Esophagus squamous epithelium (tissue), 5 donors: ENCODE measurements at regions of chr11 and their contacts with region 1.

Region 1: GRCh38 chr11:73652046-73652730 is 5.8 kb downstream of the PLEKHB1 start:
- DNase-seq: no peak
- H3K4me3 ChIP-seq: no peak overlapping the region
- H3K27ac ChIP-seq: no peak overlapping the region
- H3K4me1 ChIP-seq: peaks cover 6 to 8% (median 6%) of the 10 kb centered on the region in 3 donors
- H3K27me3 ChIP-seq: peaks cover 0 to 12% (median 0%) of the 10 kb centered on the region in 4 donors
- CTCF ChIP-seq: no peak
- POLR2A ChIP-seq: no peak

Region 2: DNA sequence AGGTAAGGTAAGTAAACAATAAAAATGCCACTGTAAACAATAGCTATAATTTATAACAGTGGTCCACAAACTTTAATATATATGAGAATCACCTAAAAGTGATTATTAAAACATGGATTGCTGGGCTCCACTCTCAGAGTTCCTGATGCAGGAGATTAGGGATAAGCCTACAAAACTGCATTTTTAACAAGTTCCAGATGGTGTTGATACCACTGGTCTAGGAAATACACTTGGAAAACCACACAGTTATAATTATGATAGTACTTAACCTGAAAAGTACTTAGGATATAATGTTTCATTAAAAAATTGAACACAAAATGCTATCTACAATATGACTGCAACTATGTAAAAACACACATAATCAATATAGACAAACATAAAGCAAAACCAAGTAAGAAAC is 530.5 kb before region 1 on chr11:
- intact Hi-C with region 1: no loop called
- DNase-seq: no peak
- H3K4me3 ChIP-seq: no peak overlapping the region
- H3K27ac ChIP-seq: no peak overlapping the region
- H3K4me1 ChIP-seq: no peaks in the 10 kb centered on the region
- H3K27me3 ChIP-seq: no peaks in the 10 kb centered on the region
- CTCF ChIP-seq: no peak
- POLR2A ChIP-seq: no peak

Region 3: DNA sequence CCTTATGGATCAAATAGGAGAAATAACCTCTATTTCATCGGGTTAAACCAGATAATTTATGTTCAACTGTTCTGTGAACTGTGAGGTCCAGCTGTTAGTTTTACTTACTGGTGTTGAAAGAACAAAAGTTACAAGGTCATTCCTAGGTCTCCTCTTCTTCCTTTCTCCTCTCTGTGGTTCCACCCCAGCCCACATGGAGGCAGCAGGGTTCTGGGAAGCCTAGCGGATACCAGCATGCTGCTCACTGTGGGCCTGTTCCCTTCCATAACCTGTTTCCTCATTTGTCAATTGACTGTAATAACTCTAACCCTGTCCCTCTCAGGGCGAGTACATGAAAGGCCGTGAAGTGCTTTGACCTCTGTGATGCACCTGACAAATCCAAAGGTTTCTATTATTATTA is 248.1 kb before region 1 on chr11:
- intact Hi-C with region 1: loop called (anchors 10 kb)
- DNase-seq: no peak
- H3K4me3 ChIP-seq: no peak overlapping the region
- H3K27ac ChIP-seq: no peak overlapping the region
- H3K4me1 ChIP-seq: no peaks in the 10 kb centered on the region
- H3K27me3 ChIP-seq: no peaks in the 10 kb centered on the region
- CTCF ChIP-seq: peak in 5 of 6 experiments; percentile 33 to 64 (median 51)
- POLR2A ChIP-seq: no peak

Region 4: DNA sequence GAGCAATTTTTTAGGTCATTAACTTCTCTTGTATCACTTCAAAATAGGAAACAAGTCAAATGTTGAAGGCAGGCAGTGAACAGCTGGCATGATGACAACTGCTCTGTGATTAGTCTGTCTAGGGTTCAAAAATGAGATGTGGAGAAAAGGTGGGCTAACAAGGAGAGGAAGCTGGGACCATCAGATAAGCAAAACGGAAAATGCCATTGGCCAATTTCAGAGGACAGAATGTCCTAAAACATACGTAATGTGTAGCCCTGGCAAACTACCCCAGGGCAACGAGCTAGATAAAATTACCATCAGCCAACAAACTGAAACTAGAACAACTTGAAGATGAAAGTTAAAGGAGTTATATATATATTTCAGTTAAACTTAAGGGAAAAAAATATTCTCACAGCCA is 182.8 kb before region 1 on chr11:
- intact Hi-C with region 1: no loop called
- DNase-seq: no peak
- H3K4me3 ChIP-seq: no peak overlapping the region
- H3K27ac ChIP-seq: peak overlapping the region in 3 of 4 donors; percentile 2 to 6 (median 3)
- H3K4me1 ChIP-seq: peaks cover 0 to 15% (median 0%) of the 10 kb centered on the region in 3 donors
- H3K27me3 ChIP-seq: no peaks in the 10 kb centered on the region
- CTCF ChIP-seq: no peak
- POLR2A ChIP-seq: no peak

Region 5: DNA sequence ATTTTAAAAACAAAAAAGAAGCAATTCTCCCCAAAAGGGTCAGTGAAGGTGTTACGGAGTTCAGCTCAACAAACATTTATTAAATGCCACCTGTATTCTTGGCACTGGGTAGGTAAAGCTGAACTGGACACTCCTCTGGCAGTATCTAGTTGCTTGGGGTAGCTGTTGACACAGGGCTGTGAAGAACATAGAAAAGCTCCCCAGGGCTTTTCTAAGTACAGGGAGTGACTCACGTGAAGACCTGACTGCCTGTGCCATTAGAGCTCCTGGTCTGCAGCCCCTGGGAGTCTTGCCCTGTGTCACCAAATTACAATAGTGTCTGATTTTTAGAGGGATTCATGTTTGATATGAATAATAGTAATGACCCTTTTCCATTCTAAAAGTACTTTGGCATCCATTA is 180.9 kb after region 1 on chr11:
- intact Hi-C with region 1: no loop called
- DNase-seq: no peak
- H3K4me3 ChIP-seq: no peak overlapping the region
- H3K27ac ChIP-seq: no peak overlapping the region
- H3K4me1 ChIP-seq: no peaks in the 10 kb centered on the region
- H3K27me3 ChIP-seq: no peaks in the 10 kb centered on the region
- CTCF ChIP-seq: no peak
- POLR2A ChIP-seq: no peak